ENCODE measurements at regions of chr5 and their contacts with region 1.

Region 1: DNA sequence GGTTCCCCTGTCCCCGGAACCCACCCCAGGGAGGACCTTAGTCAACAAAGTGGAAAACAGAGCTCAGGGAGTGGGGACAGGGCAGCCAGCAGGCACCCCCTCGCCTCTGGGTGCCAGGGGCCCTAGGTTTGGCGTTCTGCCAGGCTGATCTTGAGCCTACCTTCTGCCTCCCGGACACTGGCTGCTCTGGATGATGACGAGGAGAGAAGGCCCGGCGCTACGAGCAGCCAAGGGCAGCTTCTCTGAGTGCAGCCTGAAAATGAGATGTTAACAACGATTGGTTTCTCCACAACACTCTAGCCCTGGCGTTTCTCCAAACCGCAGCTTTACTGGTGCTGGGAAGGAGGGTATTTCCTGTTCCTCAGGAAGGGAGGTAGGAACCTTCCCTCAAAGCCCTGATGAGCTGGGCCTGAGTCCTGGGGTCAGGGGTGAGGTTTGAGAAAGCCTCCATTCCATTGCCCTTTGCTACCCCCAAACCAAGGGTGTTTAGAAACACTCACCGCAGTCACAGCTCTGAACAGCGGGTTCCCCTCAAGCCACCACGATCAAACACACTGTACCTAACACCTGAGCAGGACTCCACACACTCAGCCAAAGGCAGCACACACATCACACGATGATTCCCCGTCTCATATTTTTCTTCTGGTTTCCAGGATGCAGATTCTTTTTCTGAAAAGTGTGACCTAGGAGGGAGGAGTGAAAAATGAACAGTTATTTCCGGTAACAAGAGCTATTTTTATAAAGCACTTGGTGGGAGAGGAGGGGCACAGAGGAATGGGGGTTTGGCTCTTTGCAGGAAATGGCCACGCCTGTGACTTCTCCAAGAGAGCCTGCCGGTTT is at the start of gene STING1:
- DNase-seq: peak; percentile 57
- H3K4me3 Mint-ChIP-seq: peak within 1 kb of the TSS; percentile 90
- H3K27ac Mint-ChIP-seq: peak within 1 kb of the TSS; percentile 88
- H3K4me1 Mint-ChIP-seq: peaks cover 45% of the 10 kb centered on the region
- H3K27me3 Mint-ChIP-seq: no peaks in the 10 kb centered on the region
- total RNA-seq, gene STING1: 213 and 226 TPM in 2 replicates

Region 2: DNA sequence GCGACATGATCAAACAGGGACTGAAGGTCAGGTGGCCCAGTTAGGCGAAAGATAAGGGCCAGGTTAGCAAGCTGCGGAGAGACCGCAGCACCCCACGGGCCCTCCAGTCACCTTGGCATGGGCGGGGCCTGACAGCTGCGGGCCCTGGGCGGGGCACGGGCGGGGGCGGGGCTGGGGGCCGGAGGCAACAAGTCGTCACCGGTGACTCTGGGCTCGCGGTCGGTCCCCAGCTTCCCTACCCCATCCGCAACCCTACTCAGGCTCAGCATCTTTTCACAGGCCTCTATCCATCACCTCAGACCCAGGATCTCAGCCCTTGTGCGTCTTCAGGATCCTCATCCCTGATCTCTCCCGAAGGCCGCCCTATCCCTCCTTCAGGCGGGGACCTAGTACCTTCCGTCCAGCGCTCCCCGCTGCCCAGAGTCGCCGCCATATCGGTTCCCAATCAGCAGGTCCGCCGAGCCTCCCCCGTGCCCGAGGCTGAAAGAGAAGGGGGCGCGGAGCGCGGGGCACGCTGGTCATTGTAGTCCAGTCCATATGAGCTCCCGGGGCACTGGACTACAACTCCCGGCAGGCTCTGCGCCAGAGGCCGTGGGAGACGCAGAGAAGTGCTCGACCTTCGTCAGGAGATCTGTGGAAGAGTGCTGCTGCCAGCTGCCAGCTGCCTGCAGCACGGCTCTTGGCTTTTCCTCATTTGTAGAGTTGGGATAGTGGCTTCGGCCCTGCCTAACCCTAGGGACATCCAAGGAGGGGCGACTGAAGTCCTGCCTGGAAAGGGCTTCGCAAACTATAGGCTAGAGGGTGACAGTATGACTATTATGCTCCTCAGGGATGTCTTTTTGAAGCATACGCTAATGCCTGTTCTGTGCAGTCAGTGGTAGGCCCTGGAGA is 43.0 kb before region 1 on chr5 and contains the start of gene DNAJC18:
- intact Hi-C with region 1: loop called (anchors 1 kb)
- DNase-seq: peak; percentile 86
- H3K4me3 Mint-ChIP-seq: peak within 1 kb of the TSS; percentile 95
- H3K27ac Mint-ChIP-seq: peak within 1 kb of the TSS; percentile 99
- H3K4me1 Mint-ChIP-seq: peaks cover 66% of the 10 kb centered on the region
- H3K27me3 Mint-ChIP-seq: no peaks in the 10 kb centered on the region
- total RNA-seq, gene DNAJC18: 30.0 and 36.3 TPM in 2 replicates

Region 3: DNA sequence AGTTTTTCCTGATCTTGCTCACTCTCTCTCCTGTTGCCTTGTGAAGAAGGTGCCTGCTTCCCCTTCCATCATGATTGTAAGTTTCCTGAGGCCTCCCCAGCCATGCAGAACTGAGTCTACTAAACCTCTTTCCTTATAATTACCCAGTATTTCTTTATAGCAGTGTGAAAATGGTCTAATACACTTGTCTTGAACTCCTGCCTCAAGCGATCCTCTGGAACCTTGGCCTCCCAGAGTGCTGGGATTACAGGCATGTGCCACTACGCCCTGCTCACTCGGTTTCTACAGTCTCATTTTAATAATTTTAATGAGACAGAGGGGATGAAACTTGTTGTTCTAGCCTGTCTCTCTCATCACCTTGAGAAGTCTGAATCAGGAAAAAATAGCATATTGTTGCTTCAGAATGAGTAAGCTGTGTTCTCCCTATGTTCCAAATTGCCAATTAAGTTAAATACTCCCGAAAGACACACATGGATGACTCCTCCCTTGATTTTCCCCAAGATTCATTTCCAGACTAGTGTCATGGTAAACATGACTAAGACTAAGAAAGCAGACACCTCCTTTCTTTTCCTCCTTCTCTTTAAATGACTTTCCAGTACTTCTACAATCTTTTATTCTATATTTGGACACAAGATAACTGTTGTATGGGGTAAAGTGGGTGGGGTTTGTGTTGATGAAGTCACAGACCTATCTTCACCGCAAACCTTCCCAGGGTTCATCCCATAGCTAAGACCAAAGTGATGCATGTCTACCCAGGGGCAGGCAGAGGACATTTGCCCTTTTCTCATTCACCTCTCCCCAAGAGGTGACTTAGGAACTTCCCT is 35.1 kb before region 1 on chr5:
- intact Hi-C with region 1: loop called (anchors 1 kb)
- DNase-seq: no peak
- H3K4me3 Mint-ChIP-seq: peak overlapping the region; percentile 46
- H3K27ac Mint-ChIP-seq: peak overlapping the region; percentile 98
- H3K4me1 Mint-ChIP-seq: peaks cover 64% of the 10 kb centered on the region
- H3K27me3 Mint-ChIP-seq: no peaks in the 10 kb centered on the region

Region 4: DNA sequence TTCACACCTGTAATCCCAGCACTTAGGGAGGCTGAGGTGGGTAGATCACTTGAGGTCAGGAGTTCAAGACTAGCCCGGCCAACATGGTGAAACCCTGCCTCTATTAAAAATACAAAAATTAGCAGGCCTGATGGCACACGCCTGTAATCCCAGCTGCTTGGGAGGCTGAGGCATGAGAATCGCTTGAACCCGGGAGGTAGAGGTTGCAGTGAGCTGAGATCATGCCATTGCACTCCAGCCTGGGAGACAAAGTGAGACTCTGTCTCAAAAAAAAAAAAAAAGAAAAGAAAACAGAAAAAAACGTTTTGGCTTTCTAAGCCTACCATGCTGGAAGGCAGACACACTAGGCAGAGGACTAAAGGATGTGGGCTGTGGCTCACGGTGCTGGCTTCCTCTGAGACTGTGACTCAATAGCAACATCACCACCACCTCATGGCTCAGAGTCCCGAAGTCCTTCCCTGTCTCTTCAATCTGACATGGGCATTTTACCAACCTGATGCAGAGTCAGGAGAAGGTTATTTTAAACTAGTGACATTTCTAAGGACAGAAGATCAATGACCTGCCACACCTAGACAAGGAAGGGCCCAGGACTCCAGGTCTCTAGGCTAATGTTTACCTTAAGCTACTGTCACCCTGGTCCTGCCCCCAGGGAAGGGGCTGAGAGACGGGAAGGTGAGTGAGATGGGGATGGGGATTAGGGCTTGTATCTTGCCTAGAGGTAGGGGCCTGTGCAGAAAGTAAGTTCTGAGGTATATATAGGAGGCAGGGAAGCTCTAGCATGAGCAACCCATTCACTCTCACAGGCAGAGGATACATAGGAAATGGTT is 23.5 kb before region 1 on chr5:
- intact Hi-C with region 1: loop called (anchors 1 kb)
- DNase-seq: peak; percentile 80
- H3K4me3 Mint-ChIP-seq: peak overlapping the region; percentile 81
- H3K27ac Mint-ChIP-seq: peak overlapping the region; percentile 99
- H3K4me1 Mint-ChIP-seq: peaks cover 72% of the 10 kb centered on the region
- H3K27me3 Mint-ChIP-seq: no peaks in the 10 kb centered on the region

Region 5: GRCh38 chr5:139468421-139468931 is 13.8 kb before region 1 on chr5:
- intact Hi-C with region 1: loop called (anchors 2 kb)
- DNase-seq: no peak
- H3K4me3 Mint-ChIP-seq: peak overlapping the region; percentile 37
- H3K27ac Mint-ChIP-seq: peak overlapping the region; percentile 76
- H3K4me1 Mint-ChIP-seq: peaks cover 55% of the 10 kb centered on the region
- H3K27me3 Mint-ChIP-seq: no peaks in the 10 kb centered on the region

Measured in activated T-helper 1 cell treated with anti-CD3 and anti-CD28 coated beads, Interleukin-12 subunit alpha, Interleukin-12 subunit beta, Interleukin-2, Interleukin-4 antibody, amounts not matched to agents 30 ng/mL and 10 ng/mL and 1 ng/mL, durations not matched to agents 14 hours and 24 hours and 36 hours (primary cell).